ENCODE measurements at regions of chr1 and their contacts with region 1.

Region 1: GRCh38 chr1:226062558-226063223 is at the start of gene H3-3A:
- DNase-seq: no peak
- ATAC-seq: peak; percentile 88
- H3K4me3 ChIP-seq: peak within 1 kb of the TSS; percentile 97 to 99
- H3K27ac ChIP-seq: peak within 1 kb of the TSS; percentile 97
- H3K4me1 ChIP-seq: peaks cover 31% of the 10 kb centered on the region
- H3K27me3 ChIP-seq: no peaks in the 10 kb centered on the region
- CTCF ChIP-seq: no peak
- total RNA-seq, gene H3-3A: 404 TPM

Region 2: DNA sequence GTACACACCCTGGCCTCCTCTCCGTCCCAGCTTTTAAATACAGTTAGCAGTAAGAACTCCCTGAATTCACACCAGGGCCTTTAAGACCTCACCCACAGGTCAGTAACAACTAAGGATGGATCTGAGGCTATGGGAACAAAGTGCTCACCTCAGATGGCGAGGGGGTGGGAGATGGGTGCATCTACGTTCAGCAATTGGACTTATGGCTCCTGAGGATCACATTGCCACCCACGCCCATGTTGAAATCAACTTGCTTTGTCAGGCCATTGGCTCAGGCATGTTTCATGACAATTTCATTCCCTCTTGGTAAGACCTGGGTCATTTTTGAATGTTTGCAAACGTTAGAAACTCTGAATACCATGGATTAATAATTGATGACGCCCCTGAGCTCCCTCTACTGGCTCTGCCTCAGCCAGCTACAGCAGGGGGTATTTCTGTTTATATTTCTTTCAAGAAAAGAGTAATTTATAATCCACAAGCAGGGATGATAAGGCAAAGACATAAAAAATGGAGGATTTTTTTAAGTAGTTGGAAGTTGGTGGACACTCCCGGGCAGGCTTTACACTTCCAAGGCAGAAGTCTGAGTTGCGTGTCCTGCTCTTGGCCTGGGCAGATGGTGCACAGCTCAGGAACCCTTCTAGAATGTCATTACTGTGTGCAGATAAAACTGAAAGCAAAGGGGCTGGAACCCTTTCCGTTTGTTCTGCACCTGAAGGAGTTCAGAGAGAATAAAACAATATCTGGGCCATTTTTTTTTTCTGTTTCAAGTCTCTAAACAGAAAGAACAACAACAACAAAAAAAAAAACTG is 621.2 kb before region 1 on chr1:
- CTCF ChIA-PET with region 1: no interaction called
- POLR2A ChIA-PET with region 1: interaction called, 16 read pairs
- in situ Hi-C with region 1: no loop called
- intact Hi-C with region 1: no loop called
- DNase-seq: no peak
- ATAC-seq: no peak
- H3K4me3 ChIP-seq: no peak overlapping the region
- H3K27ac ChIP-seq: no peak overlapping the region
- H3K4me1 ChIP-seq: no peaks in the 10 kb centered on the region
- H3K27me3 ChIP-seq: no peaks in the 10 kb centered on the region
- CTCF ChIP-seq: peak; percentile 50; the same call in 1 of the 2 replicates

Region 3: DNA sequence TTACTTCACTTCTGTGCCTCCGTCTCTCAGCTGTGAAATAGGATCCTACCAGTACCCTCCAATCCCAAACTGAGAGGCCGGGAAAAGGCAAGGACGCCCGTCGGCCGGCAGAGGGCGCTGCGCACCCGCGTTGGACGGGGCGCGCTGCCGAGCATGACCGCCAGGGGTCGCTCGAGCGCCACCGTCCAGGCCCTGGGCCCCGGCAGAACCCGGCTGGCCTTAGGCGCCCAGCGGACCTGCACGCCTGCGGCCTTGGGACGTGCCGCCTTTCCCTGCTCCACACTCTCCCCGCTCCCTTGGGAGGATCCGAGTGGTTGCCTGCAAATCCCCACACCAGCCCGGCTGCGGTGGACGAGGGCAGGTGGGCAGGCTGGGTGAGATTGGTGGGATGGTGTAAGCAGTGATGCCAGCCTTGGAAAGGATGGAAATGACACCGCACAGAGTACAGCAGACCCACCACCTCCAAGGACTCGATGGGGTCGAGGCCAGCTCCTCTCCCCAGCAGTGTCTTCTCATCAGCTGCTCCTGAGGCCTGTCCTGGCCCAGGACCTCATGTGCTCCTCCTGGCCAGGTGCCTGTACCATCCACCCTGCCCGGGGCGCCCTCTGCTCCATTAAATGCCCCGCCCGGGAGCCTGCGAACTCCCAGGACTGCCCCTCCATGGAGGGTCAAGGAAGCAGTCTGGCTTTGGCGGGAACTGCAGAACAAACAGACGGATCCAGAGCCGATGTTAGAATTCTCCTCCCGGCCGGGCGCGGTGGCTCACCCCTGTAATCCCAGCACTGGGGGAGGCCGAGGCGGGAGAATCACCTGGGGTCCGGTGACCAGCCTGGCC is 587.5 kb before region 1 on chr1:
- CTCF ChIA-PET with region 1: no interaction called
- POLR2A ChIA-PET with region 1: no interaction called
- in situ Hi-C with region 1: no loop called
- intact Hi-C with region 1: loop called (anchors 10 kb)
- DNase-seq: no peak
- ATAC-seq: peak; percentile 90
- H3K4me3 ChIP-seq: peak overlapping the region in 1 of 2 experiments; percentile 26; a peak in 2 of 4 replicates
- H3K27ac ChIP-seq: no peak overlapping the region
- H3K4me1 ChIP-seq: no peaks in the 10 kb centered on the region
- H3K27me3 ChIP-seq: no peaks in the 10 kb centered on the region
- CTCF ChIP-seq: peak; percentile 100

Region 4: DNA sequence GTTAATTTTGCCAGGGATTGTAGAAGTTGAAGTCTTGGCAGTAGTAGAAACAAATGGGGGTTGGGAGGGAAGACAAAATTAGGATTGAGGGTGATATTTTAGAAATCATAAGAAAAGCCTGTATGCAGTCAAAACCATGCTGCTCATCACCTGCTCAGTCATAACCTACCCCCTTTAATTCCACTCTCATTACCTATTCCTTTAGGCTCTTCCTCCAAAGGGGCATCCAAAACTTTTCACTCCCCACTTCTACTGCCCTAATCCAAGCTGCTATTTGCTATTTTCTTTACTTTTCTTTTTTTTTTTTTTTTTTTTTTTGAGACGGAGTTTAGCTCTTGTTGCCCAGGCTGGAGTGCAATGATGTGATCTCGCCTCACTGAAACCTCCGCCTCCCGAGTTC is 11.4 kb after region 1 on chr1:
- CTCF ChIA-PET with region 1: interaction called, 3 read pairs
- POLR2A ChIA-PET with region 1: interaction called, 13 read pairs
- in situ Hi-C with region 1: no loop called
- intact Hi-C with region 1: no loop called
- DNase-seq: no peak
- ATAC-seq: no peak
- H3K4me3 ChIP-seq: no peak overlapping the region
- H3K27ac ChIP-seq: no peak overlapping the region
- H3K4me1 ChIP-seq: no peaks in the 10 kb centered on the region
- H3K27me3 ChIP-seq: no peaks in the 10 kb centered on the region
- CTCF ChIP-seq: no peak

Region 5: GRCh38 chr1:226121587-226122400 is 59.1 kb after region 1 on chr1:
- CTCF ChIA-PET with region 1: interaction called, 7 read pairs
- POLR2A ChIA-PET with region 1: no interaction called
- in situ Hi-C with region 1: no loop called
- intact Hi-C with region 1: loop called (anchors 5 kb)
- DNase-seq: no peak
- ATAC-seq: peak; percentile 85
- H3K4me3 ChIP-seq: peak overlapping the region; percentile 50 to 61
- H3K27ac ChIP-seq: peak overlapping the region; percentile 48; the same call in 1 of the 2 replicates
- H3K4me1 ChIP-seq: peaks cover 18% of the 10 kb centered on the region
- H3K27me3 ChIP-seq: no peaks in the 10 kb centered on the region
- CTCF ChIP-seq: peak; percentile 98

Region 6: DNA sequence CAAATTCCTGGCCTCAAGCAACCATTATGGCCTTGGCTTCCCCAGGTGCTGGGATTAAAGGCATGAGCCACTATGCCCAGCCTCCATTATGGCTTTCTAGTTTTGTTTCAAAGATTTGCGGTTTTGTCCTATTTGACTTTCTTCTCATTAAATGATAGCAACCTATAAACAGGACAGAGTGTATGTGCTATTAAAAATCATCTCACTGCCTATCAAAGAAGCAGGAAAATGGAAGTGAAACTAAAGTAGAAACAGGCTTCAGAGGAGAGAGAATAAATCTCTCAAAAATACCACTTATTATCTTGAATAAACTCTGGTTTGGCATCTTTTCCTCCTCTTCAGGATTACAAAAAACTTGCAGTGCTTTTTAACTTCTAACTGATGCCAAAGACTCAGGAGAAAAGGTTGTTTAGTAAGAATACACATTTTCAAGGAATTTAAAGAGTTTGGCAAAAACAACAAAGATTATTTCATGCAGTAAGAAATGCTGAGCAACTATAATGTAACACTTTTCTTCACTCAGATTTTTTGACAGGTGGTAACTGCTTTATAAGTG is 95.1 kb after region 1 on chr1:
- CTCF ChIA-PET with region 1: no interaction called
- POLR2A ChIA-PET with region 1: interaction called, 11 read pairs
- in situ Hi-C with region 1: no loop called
- intact Hi-C with region 1: no loop called
- DNase-seq: no peak
- ATAC-seq: no peak
- H3K4me3 ChIP-seq: no peak overlapping the region
- H3K27ac ChIP-seq: no peak overlapping the region
- H3K4me1 ChIP-seq: no peaks in the 10 kb centered on the region
- H3K27me3 ChIP-seq: no peaks in the 10 kb centered on the region
- CTCF ChIP-seq: no peak